Adrenal gland (tissue), 19 donors: ENCODE measurements at regions of chr2 and their contacts with region 1.

Region 1: DNA sequence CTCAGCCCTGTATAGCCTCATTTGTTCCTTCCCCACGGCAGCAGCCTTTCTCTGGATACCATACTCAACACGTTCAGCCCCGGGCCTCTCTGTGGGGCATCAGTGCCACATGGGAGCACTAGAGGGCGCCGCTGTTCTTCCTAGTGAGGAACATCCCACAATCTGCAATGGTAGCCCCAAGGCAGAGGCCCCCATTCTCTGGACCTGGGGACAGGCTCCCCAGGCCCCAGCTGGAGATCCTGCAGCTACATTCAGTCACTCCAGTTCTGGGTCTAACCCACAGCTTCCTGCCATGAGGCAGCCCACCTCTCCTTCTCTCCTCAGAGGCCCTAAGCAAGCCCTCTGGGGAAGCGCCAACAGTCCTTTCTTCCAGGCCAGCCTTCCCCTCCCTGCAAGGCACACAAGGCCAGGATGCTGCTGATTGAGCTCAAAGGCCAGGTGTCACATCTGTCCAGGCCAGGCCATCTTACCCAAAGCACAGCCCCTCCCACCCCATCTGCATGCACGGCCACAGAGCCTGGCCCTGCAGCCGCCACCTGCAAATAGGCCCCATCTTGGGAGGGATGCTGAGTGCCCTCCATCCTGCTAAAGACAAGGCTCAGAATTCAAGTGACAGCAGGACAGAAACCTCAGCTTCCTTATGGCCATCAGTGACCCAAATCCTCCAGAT is 14.3 kb upstream of the SFXN5 start:
- DNase-seq: peak; percentile 74 to 95 (median 87)
- H3K4me3 ChIP-seq: no peak overlapping the region
- H3K27ac ChIP-seq: no peak overlapping the region
- H3K4me1 ChIP-seq: peaks cover 0 to 5% of the 10 kb centered on the region in 2 donors
- H3K27me3 ChIP-seq: no peaks in the 10 kb centered on the region
- CTCF ChIP-seq: peak; percentile 83 to 95 (median 92)
- POLR2A ChIP-seq: no peak

Region 2: GRCh38 chr2:73156539-73157124 is 70.8 kb after region 1 on chr2:
- intact Hi-C with region 1: loop called (anchors 2 to 5 kb)
- DNase-seq: peak; percentile 61 to 79 (median 76)
- H3K4me3 ChIP-seq: no peak overlapping the region
- H3K27ac ChIP-seq: no peak overlapping the region
- H3K4me1 ChIP-seq: peaks cover 0 to 7% of the 10 kb centered on the region in 2 donors
- H3K27me3 ChIP-seq: peaks cover 5% of the 10 kb centered on the region
- CTCF ChIP-seq: peak; percentile 57 to 81 (median 74)
- POLR2A ChIP-seq: no peak

Region 3: DNA sequence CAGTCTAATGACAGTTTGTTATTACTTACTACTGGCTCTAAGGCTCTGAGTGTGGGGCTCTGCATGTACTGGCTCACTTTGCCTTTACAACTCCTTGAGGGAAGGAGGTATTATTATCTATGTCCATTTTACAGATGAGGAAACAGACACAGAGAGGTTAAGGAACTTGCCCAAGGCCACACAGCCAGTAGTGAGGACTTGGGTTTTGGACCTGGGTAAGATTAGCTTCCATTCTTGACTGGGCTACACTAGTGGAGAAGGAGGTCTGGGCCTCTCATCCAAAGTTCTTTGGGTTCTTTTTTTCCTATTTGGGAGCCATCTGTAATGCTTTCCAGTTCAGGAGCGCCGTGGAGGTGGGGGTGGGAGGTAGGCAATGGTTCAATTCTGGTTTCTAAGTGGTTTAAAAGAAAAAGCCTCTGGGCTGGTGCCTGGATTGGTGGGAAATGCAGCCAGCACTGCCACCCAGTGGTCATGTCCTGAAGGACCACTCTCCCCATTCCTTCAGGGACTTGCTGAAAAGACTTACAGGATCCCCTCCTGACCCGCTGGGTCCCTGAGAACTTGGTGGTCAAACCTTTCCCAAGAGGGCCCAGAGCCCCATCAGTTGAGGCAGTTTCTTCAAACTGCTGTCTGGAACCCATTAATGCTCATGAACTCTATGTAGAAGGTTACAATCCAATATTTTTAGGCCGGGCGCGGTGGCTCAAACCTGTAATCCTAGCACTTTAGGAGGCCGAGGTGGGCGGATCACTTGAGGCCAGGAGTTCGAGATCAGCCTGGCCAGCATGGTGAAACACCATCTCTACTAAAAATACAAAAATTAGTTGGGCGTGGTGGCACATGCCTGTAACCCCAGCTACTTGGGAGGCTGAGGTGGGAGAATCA is 77.9 kb after region 1 on chr2:
- intact Hi-C with region 1: loop called in 1 of 2 experiments (anchors 5 kb)
- DNase-seq: peak; percentile 54 to 88 (median 75)
- H3K4me3 ChIP-seq: no peak overlapping the region
- H3K27ac ChIP-seq: no peak overlapping the region
- H3K4me1 ChIP-seq: no peaks in the 10 kb centered on the region
- H3K27me3 ChIP-seq: peaks cover 3% of the 10 kb centered on the region
- CTCF ChIP-seq: peak; percentile 75 to 88 (median 82)
- POLR2A ChIP-seq: no peak

Region 4: DNA sequence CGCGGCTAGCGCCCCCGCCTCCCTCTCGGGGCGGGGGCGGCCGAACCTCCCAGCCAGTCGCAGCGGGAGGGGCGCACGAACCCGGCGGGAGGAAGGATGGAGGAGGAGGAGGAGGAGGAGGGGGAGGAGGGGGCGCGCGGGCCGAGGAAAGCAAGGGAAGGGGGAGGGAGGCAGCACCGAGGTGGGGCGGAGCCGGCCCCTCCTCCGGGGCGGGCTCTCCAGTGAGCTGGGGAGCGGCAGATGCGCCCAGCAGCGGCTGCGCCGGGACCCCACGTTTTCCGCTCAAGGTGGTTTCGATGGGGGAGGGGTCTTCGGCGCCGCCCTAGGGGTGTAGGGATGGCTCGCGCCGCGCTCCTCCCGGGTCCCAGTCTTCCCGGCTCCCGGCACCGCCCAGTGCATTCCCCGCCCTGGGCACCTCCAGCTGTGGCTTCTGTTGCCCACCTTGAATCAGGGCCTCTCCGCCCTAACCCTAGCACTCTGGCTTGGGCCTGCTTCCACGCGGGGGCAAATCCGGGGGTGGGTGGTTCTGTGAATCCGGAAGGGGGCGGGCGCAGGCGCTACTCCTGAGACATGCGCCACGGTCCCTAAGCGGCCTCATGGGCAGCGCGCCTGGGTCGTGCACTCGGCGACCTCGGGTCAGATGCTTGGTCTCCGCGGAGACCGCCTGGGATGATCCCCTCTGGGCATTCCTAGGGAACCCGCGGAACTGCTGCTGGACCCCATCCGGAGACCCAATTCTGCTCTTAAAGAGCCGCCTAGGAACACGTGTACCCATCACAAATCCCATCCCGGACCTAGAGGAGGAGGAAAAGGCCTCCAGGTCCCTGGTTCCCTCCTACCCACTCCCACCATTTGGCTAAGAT is 198.7 kb after region 1 on chr2 and contains the start of gene FBXO41:
- intact Hi-C with region 1: no loop called
- DNase-seq: peak in 5 of 7 donors; percentile 34 to 56 (median 38)
- H3K4me3 ChIP-seq: peak within 1 kb of the TSS; percentile 35 to 77 (median 50)
- H3K27ac ChIP-seq: peak within 1 kb of the TSS in 1 of 5 donors; percentile 19
- H3K4me1 ChIP-seq: peaks cover 8 to 12% of the 10 kb centered on the region in 2 donors
- H3K27me3 ChIP-seq: no peaks in the 10 kb centered on the region
- CTCF ChIP-seq: no peak
- POLR2A ChIP-seq: peak in 1 of 2 donors; percentile 15
- total RNA-seq, gene FBXO41: 3.4 to 8.1 (median 5.5) TPM